Thyroid gland (tissue), 4 donors: ENCODE measurements at regions of chr12 and their contacts with region 1.

Region 1: DNA sequence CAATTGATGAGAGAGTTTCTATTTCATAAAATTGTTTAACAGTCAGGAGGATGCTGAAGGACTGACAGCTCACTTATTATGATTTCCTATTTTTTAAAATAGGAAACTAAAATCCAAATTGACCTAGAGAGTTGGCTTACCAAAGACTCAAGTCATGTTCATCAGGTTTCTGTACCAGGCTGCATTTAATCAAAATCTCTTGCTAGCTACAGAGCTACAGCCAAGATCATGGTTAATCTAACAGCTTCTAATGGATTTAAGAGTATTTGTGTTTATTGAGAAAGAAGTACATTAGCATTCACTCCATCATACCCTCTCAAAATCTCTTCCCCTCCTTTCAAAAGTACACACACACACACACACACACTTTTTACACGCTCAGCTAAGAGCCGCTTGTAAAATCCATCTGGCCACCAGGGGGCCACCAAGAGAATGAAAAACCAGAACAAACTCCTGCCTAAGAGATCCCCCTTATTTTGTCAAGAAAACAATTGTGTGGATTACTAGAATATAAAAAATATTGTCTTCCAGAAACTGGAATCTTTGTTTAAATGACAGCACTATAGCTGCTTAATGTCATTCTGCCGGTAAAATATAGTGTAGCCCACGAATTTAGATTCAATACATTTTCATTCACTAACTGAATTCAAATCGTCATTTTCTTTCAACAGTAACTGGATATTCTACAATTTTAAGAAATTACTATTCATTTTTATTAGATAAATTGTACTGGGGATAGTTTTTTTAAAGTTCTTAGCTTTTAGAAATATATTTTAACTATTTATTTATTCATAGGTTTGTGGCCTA is 334.0 kb downstream of the BTG1 start:
- DNase-seq: peak; percentile 69 to 78
- H3K4me3 ChIP-seq: no peak overlapping the region
- H3K27ac ChIP-seq: no peak overlapping the region
- H3K4me1 ChIP-seq: no peaks in the 10 kb centered on the region
- H3K27me3 ChIP-seq: no peaks in the 10 kb centered on the region
- CTCF ChIP-seq: peak; percentile 66 to 84 (median 70)
- POLR2A ChIP-seq: no peak

Region 2: GRCh38 chr12:91877022-91877421 is 65.3 kb after region 1 on chr12:
- intact Hi-C with region 1: no loop called
- DNase-seq: peak; percentile 6 to 25
- H3K4me3 ChIP-seq: no peak overlapping the region
- H3K27ac ChIP-seq: no peak overlapping the region
- H3K4me1 ChIP-seq: no peaks in the 10 kb centered on the region
- H3K27me3 ChIP-seq: no peaks in the 10 kb centered on the region
- CTCF ChIP-seq: no peak
- POLR2A ChIP-seq: no peak

Region 3: GRCh38 chr12:92145731-92146496 is 334.2 kb after region 1 on chr12 and contains the start of gene BTG1:
- intact Hi-C with region 1: loop called (anchors 10 kb)
- DNase-seq: peak; percentile 98 to 99
- H3K4me3 ChIP-seq: peak within 1 kb of the TSS; percentile 68 to 91 (median 83)
- H3K27ac ChIP-seq: peak within 1 kb of the TSS; percentile 97 to 100 (median 98)
- H3K4me1 ChIP-seq: peaks cover 13 to 16% of the 10 kb centered on the region in 2 donors
- H3K27me3 ChIP-seq: no peaks in the 10 kb centered on the region
- CTCF ChIP-seq: no peak
- POLR2A ChIP-seq: peak; percentile 96 to 100
- total RNA-seq, gene BTG1: 21.9 to 28.1 (median 24.3) TPM

Region 4: DNA sequence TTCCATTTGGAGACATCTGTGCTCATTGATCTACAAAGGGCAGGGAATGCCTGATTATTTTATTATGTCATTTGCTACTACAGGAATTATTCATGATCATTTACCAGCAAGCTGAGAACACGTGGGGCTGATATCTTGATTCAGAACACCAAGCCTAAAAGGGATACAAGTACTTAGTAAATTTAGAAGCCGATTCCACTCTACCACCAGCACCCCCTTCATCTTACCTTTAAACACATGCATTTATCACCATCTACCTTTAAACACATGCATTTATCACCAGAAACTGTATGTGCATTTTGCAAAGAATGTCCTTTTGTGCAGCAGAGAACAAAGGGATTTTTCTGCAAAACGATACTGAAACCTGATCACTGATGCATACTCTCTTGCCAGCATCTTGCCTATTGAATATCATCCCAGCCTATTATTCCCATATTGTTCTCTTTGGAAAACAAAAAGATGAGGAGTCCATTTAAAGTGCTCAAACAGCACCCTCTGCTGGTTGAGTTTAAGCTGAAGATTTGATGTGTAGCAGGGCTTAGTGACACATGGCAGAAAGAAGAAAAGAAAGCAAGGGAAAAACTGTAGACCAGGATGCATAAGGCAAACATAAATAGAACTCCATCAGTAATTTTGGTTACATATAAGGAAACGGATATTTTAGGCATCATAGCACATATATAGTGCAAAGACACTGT is 758.5 kb after region 1 on chr12:
- intact Hi-C with region 1: loop called (anchors 5 kb)
- DNase-seq: peak; percentile 56 to 57
- H3K4me3 ChIP-seq: no peak overlapping the region
- H3K27ac ChIP-seq: no peak overlapping the region
- H3K4me1 ChIP-seq: peaks cover 0 to 11% of the 10 kb centered on the region in 2 donors
- H3K27me3 ChIP-seq: no peaks in the 10 kb centered on the region
- CTCF ChIP-seq: peak in 5 of 6 experiments; percentile 48 to 95 (median 81)
- POLR2A ChIP-seq: no peak